ENCODE measurements at regions of chr1 and their contacts with region 1.

Region 1: DNA sequence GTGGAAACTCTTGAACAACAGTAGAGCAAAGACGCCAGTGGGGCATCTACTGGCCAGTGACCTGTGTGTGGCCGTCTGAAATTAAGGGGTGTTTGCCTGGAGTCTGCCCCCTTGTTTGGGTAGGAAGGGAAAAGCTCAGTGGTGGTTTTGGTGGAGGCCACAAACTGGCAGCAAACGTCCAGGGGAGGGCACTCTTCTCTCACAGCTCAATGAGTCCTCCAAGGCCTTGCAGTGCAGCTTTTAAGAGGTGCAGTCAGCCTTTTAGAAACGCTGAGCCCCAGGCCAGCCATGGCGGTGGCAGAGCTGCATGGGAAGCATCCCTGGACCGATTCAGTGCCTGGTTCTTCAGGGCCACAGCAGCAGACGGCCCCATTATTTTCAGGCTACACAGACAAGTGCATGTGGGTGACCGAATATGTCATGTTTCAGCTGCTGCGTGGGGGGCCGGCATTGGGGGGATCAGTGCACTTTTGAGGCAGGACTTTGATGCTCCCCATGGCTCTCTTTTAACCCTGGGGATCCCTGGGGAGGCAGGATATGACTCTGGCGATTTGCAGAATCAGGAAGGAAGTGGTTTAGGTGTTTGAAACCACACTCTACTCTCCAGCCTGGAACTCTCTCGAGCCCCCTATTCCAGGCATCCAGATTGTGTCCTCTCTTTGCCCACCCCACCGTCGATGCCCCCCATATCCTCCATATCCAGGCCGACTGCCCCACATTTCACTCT is 414.0 kb downstream of the PRDM2 start:
- DNase-seq: peak; percentile 92
- H3K4me3 ChIP-seq: no peak overlapping the region
- H3K27ac ChIP-seq: peak overlapping the region; percentile 21
- H3K4me1 ChIP-seq: peaks cover 42% of the 10 kb centered on the region
- CTCF ChIP-seq: peak; percentile 94

Region 2: GRCh38 chr1:14205066-14205465 is 91.1 kb after region 1 on chr1:
- CTCF ChIA-PET with region 1: no interaction called
- POLR2A ChIA-PET with region 1: no interaction called
- intact Hi-C with region 1: no loop called
- DNase-seq: no peak
- H3K4me3 ChIP-seq: no peak overlapping the region
- H3K27ac ChIP-seq: no peak overlapping the region
- H3K4me1 ChIP-seq: no peaks in the 10 kb centered on the region
- CTCF ChIP-seq: no peak

Region 3: DNA sequence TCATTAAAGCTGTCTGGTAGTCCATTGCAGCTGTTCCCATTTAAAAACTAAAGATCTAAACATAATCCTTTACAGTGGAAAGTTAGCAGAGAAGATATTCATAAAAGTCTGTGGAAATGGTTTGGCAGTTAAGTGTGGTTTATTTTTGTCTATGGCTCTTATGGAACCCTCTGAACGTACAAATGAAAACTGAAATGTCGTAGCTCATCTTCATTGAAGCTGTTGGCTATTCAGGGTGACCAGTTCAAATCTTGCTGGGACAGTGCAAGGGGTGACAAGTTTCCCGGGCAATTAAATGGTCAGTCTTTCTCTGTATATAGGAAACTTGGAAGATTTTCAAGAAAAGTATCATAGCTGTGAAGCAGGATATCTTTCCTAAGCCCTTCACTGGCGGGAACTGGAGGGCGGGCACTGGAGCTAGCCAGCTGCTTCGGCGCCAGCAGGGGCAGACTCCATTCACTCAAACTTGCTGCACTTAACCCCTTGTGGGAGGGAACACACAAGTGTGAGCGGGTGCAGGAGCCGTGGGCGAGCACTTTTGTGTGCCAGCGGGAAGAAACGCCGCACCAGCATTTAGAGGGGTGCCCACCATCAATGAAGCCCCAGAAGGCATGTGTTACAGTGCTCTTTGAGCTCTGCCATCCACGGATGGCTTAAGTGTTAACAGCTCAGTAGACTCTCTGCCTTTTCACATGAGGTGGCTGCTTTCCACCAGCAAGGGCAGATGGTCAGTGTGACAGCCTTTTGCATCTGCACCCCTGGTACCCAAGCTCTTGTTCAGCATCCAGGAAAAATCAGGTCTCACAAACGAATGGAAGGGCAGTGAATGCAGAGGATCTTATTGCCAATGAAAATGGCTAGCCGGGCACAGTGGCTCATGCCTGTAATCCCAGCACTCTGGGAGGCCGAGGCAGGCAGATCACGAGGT is 252.4 kb after region 1 on chr1:
- CTCF ChIA-PET with region 1: interaction called, 3 read pairs
- POLR2A ChIA-PET with region 1: no interaction called
- intact Hi-C with region 1: loop called (anchors 1 kb)
- DNase-seq: no peak
- H3K4me3 ChIP-seq: no peak overlapping the region
- H3K27ac ChIP-seq: peak overlapping the region; percentile 50
- H3K4me1 ChIP-seq: peaks cover 83% of the 10 kb centered on the region
- CTCF ChIP-seq: peak; percentile 37; the same call in 1 of the 2 replicates

Region 4: DNA sequence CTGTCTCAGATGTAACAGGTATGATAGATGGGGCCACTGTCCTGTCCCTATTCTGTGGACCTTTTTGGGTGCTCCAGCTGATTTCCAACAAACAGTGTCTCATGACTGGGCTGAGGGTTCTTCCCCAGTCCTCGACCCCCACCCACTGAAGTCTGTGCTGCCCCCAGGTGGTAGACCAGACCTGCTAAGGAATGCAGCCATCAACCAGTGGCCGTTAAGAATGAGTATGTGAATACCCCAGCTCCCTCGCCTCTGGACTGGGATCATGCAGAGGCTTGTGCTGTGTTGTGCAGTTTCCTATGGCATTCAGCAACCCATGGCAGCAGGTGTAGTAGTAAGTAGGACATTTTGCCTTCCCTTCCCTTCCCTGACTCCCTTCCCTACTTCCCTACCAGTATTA is 301.4 kb after region 1 on chr1:
- CTCF ChIA-PET with region 1: interaction called, 3 read pairs
- POLR2A ChIA-PET with region 1: no interaction called
- intact Hi-C with region 1: loop called (anchors 2 kb)
- DNase-seq: peak; percentile 74
- H3K4me3 ChIP-seq: no peak overlapping the region
- H3K27ac ChIP-seq: no peak overlapping the region
- H3K4me1 ChIP-seq: peaks cover 8% of the 10 kb centered on the region
- CTCF ChIP-seq: peak; percentile 85

Region 5: DNA sequence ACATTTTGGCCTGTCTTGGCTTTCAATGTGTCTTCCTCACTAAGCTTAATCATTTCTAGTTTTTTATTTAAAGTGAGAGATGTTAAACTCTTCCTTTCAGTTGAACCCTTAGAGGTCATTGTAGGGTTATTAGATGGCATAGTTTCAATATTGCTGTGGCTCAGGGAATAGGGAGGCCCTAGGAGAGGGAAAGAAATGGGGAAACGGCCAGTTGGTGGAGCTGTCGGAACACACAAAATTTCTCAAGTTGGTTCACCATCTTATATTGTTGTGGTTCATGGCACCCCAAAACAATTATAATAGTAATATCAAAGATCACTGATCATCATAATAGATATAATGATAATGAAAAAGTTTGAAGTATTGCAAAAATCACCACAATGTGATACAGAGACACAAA is 453.1 kb after region 1 on chr1:
- CTCF ChIA-PET with region 1: no interaction called
- POLR2A ChIA-PET with region 1: no interaction called
- intact Hi-C with region 1: loop called (anchors 10 kb)
- DNase-seq: peak; percentile 25
- H3K4me3 ChIP-seq: no peak overlapping the region
- H3K27ac ChIP-seq: no peak overlapping the region
- H3K4me1 ChIP-seq: peaks cover 7% of the 10 kb centered on the region
- CTCF ChIP-seq: peak; percentile 73

Region 6: GRCh38 chr1:14850566-14850965 is 736.6 kb after region 1 on chr1:
- CTCF ChIA-PET with region 1: no interaction called
- POLR2A ChIA-PET with region 1: no interaction called
- intact Hi-C with region 1: loop called (anchors 5 kb)
- DNase-seq: peak; percentile 67
- H3K4me3 ChIP-seq: no peak overlapping the region
- H3K27ac ChIP-seq: no peak overlapping the region
- H3K4me1 ChIP-seq: no peaks in the 10 kb centered on the region
- CTCF ChIP-seq: peak; percentile 72

Region 7: GRCh38 chr1:15046487-15047165 is 932.6 kb after region 1 on chr1:
- CTCF ChIA-PET with region 1: no interaction called
- POLR2A ChIA-PET with region 1: no interaction called
- intact Hi-C with region 1: loop called (anchors 10 kb)
- DNase-seq: peak; percentile 72
- H3K4me3 ChIP-seq: no peak overlapping the region
- H3K27ac ChIP-seq: no peak overlapping the region
- H3K4me1 ChIP-seq: no peaks in the 10 kb centered on the region
- CTCF ChIP-seq: peak; percentile 91